PC-3 (cell line): ENCODE measurements at regions of chr16 and their contacts with region 1.

Region 1: DNA sequence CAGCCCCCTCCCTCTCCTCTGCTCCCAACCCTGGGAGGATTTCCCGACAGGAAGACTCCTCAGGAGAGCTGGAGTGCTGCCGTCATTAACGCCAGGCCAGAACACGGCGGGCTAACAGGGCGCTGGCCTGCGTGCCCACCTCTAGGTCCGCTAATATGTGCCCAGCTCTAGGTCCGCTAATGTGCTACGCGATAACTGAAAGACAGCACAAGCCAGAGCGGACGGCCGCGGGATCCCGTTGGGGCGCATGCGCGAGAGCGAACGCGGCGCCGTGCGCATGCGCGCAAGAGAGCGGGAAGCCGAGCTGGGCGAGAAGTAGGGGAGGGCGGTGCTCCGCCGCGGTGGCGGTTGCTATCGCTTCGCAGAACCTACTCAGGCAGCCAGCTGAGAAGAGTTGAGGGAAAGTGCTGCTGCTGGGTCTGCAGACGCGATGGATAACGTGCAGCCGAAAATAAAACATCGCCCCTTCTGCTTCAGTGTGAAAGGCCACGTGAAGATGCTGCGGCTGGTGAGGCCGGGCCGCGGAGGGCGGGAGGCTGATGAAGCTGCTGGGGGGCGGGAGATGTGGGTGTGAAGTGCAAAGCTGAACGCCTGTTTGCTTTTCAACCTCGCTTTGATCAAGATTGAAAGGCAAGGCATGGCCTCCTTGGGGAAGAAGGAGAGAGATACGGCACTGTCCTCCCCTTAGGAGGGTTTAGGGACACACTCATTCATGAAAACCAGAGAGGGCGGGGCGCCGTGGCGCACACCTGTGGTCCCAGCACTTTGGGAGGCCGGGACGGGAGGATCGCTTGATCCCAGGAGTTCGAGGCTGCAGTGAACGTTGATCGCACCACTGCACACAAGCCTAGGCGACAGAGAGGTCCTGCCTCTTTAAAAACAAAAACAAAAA is at the start of gene CKLF:
- DNase-seq: peak; percentile 85
- ATAC-seq: peak; percentile 60
- H3K4me3 ChIP-seq: peak within 1 kb of the TSS; percentile 64
- H3K27ac ChIP-seq: no peak within 1 kb of the TSS
- H3K4me1 ChIP-seq: peaks cover 21% of the 10 kb centered on the region
- H3K27me3 ChIP-seq: no peaks in the 10 kb centered on the region
- CTCF ChIP-seq: no peak
- total RNA-seq, gene CKLF: 47.9 and 49.7 TPM in 2 replicates

Region 2: GRCh38 chr16:66399930-66400329 is 152.6 kb before region 1 on chr16:
- CTCF ChIA-PET with region 1: no interaction called
- POLR2A ChIA-PET with region 1: interaction called, 13 read pairs
- intact Hi-C with region 1: no loop called
- DNase-seq: no peak
- ATAC-seq: no peak
- H3K4me3 ChIP-seq: no peak overlapping the region
- H3K27ac ChIP-seq: no peak overlapping the region
- H3K4me1 ChIP-seq: no peaks in the 10 kb centered on the region
- H3K27me3 ChIP-seq: no peaks in the 10 kb centered on the region
- CTCF ChIP-seq: no peak

Region 3: DNA sequence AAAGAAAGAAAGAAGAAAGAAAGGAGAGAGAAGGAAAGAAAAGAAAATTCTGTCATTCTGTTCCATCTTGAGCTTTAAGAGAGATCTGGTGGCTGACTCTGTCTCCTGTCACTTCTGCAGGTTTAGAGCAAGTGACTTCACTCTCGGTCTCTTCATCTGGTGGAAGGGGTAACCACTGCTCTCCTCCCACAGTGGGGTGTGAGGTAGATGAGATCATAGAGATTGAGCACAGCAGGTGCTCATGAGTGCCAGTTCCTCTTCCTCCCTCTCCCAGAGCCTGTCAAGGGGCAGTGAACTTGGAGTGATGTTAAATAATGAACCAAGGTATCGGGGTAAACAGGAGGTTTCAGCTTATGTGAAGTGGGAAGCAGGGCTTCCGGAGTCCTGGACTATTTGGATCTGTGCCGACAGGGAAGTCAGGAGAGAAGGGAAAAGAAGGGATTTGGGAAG is 77.8 kb before region 1 on chr16:
- CTCF ChIA-PET with region 1: no interaction called
- POLR2A ChIA-PET with region 1: no interaction called
- intact Hi-C with region 1: no loop called
- DNase-seq: peak; percentile 39
- ATAC-seq: no peak
- H3K4me3 ChIP-seq: no peak overlapping the region
- H3K27ac ChIP-seq: no peak overlapping the region
- H3K4me1 ChIP-seq: peaks cover 20% of the 10 kb centered on the region
- H3K27me3 ChIP-seq: no peaks in the 10 kb centered on the region
- CTCF ChIP-seq: no peak

Region 4: GRCh38 chr16:66511615-66512500 is 40.7 kb before region 1 on chr16:
- CTCF ChIA-PET with region 1: interaction called, 3 read pairs
- POLR2A ChIA-PET with region 1: interaction called, 3 read pairs
- intact Hi-C with region 1: loop called (anchors 5 kb)
- DNase-seq: peak; percentile 90
- ATAC-seq: peak; percentile 8
- H3K4me3 ChIP-seq: peak overlapping the region; percentile 53; the same call in 1 of the 2 replicates
- H3K27ac ChIP-seq: peak overlapping the region; percentile 82
- H3K4me1 ChIP-seq: peaks cover 74% of the 10 kb centered on the region
- H3K27me3 ChIP-seq: no peaks in the 10 kb centered on the region
- CTCF ChIP-seq: no peak

Region 5: GRCh38 chr16:66521951-66522771 is 30.4 kb before region 1 on chr16:
- CTCF ChIA-PET with region 1: no interaction called
- POLR2A ChIA-PET with region 1: no interaction called
- intact Hi-C with region 1: loop called (anchors 2 kb)
- DNase-seq: peak; percentile 95
- ATAC-seq: peak; percentile 94
- H3K4me3 ChIP-seq: no peak overlapping the region
- H3K27ac ChIP-seq: peak overlapping the region; percentile 67
- H3K4me1 ChIP-seq: peaks cover 25% of the 10 kb centered on the region
- H3K27me3 ChIP-seq: no peaks in the 10 kb centered on the region
- CTCF ChIP-seq: no peak